ENCODE measurements at regions of chr19 and their contacts with region 1.

Region 1: GRCh38 chr19:44988896-44989556 is 12.2 kb upstream of the RELB start:
- DNase-seq: peak; percentile 88
- H3K4me3 ChIP-seq: no peak overlapping the region
- H3K27ac ChIP-seq: peak overlapping the region; percentile 45
- H3K4me1 ChIP-seq: peaks cover 34% of the 10 kb centered on the region
- CTCF ChIP-seq: peak; percentile 88

Region 2: DNA sequence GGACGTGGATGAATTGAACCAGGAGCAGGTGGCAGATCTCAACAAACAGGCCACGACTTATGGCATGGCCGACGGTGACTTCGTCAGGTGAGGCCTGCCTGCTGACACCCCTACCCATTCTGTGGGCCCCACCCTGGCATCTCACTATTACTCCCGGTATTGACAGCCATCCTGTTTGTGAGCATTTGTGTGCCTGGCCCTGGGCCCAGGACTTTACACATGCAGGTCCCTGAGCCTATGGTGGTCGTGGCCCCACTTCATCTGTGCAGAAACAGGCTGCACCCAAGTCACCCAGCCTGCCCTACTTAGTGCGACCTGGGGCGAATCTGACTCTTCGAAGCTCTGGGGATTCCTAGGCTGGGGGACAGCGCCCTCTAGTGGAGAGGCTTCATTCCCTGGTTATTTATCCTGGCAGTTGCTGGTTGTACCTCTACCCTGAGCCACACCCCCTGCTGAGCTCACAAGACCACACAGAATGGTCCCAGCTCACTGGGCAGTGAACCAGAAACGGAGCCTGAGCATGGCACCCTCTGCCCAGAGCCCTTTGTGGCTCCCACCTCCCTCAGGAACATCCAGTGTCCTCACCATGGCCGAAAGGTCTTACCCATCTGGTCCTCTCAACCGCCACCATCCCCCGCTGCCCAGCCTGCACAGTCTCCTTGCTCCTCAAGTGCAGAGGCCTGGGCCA is 70.4 kb after region 1 on chr19:
- CTCF ChIA-PET with region 1: interaction called, 4 read pairs
- POLR2A ChIA-PET with region 1: interaction called, 3 read pairs
- intact Hi-C with region 1: loop called (anchors 1 kb)
- DNase-seq: peak; percentile 88
- H3K4me3 ChIP-seq: no peak overlapping the region
- H3K27ac ChIP-seq: peak overlapping the region; percentile 14
- H3K4me1 ChIP-seq: peaks cover 31% of the 10 kb centered on the region
- CTCF ChIP-seq: peak; percentile 96